PC-9 (cell line): ENCODE measurements at regions of chr7 and their contacts with region 1.

Region 1: DNA sequence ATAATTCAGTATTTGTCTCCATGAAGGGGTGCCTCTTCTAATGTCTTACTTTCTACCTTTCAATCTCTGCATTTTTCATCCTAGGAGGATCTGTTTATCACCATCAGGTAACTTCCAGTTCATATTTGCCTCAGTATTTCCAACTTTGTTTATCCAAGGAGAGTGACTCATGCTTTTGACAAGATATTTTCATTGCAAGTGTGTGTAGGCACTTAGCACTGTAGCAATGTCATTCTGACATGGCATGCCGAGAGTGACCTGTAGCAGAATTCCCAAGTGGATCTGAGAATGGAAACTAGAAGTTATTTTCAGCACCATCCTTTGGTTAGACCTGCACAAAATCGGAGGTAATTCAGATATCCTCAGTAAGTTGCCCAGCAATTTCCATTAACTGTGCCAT is 129.9 kb downstream of the INHBA start:
- DNase-seq: peak; percentile 56 to 88
- H3K4me3 ChIP-seq: 0 out of 2 replicates have a peak overlapping the region, but pooled peaks have one; percentile 18
- H3K27ac ChIP-seq: peak overlapping the region; percentile 89
- H3K4me1 ChIP-seq: peaks cover 38% of the 10 kb centered on the region
- H3K27me3 ChIP-seq: no peaks in the 10 kb centered on the region
- CTCF ChIP-seq: no peak

Region 2: DNA sequence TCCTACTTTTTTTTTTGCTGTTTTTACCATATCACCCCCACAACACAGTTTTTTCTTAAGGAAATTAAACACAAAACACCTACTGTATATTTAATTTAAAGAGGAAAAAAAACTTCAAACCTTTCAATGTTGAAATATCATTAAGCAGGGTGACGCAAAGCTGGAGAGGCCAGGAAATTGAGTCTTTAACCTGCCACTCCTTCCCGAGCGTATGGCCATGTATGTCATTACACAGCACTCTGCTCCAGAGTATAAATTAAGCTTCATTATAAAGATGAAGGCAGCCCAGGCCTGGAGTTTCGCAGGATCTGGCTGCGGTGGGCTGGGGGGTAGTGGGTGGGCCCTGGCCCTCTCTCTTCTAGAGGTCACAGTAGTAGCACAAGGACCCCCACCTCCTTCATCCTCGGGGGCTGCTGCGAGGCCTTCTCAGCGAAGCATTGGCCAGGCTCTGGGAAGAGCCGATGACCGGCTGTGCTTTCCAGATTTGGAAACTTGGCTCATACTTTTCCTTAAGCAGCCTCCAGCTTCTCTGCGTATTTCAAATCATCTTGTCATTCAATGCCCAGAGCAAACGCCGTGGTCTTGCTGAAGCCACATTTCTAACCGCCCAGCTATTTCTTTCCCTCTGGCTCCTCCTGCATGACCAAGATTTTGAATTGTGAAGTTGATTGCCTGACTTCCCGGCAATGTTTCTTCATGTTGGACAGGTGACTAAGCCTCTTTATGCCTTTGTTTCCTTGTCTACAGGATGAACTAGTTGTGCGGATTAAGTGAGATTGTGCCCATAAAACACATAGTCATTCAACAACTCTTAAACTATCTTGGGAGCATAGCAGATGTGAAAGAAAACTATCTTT is 673.1 kb before region 1 on chr7:
- CTCF ChIA-PET with region 1: no interaction called
- POLR2A ChIA-PET with region 1: no interaction called
- intact Hi-C with region 1: loop called (anchors 5 kb)
- DNase-seq: peak; percentile 48 to 89
- H3K4me3 ChIP-seq: peak overlapping the region; percentile 51
- H3K27ac ChIP-seq: peak overlapping the region; percentile 94
- H3K4me1 ChIP-seq: peaks cover 25% of the 10 kb centered on the region
- H3K27me3 ChIP-seq: no peaks in the 10 kb centered on the region
- CTCF ChIP-seq: no peak

Region 3: DNA sequence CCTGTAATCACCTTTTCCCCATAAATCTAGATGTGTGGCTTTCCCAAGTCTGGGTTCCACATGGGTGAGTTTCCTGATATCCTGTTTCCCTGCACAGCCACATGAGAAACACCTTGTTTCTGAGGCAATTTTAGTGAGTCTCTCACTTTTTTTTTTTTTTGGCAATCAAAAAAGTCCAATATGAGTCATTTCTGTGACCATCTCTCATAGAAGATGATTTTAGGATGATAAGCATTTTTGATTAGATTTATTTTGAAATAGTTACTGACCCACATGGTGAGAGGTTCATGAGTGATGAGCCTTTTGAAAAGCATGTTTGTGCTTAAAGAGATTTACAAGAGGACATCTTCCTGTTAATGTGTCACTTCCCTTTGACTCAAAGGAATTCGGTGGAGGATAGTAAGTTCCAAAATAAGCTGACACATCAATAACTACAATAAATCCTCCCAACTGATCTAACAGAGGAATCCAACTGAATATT is 334.1 kb before region 1 on chr7:
- CTCF ChIA-PET with region 1: no interaction called
- POLR2A ChIA-PET with region 1: interaction called, 11 read pairs
- intact Hi-C with region 1: no loop called
- DNase-seq: peak in 1 of 2 experiments; percentile 67
- H3K4me3 ChIP-seq: no peak overlapping the region
- H3K27ac ChIP-seq: peak overlapping the region; percentile 67
- H3K4me1 ChIP-seq: peaks cover 21% of the 10 kb centered on the region
- H3K27me3 ChIP-seq: no peaks in the 10 kb centered on the region
- CTCF ChIP-seq: no peak